ENCODE measurements at regions of chr1 and their contacts with region 1.

Region 1: DNA sequence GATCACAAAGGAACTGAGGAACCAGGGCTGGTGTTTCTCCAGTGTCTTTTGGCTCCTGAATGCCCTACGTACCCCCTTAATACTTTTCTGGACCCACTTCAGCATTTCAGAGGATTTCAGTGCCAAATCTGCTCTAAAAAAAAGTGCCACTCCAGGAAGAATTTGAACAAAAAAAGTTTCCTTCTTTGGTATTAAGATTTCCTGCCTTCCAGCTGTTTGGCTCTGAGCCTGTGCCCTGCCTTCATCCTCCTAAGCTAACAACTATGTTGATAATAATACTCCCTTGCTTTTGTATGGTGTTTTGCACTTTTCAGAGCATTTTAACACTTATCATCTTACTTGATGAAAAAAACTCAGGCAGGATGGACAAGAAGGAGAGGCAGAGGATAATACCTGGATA is 11.0 kb upstream of the RIMS3 start:
- DNase-seq: no peak
- H3K4me3 ChIP-seq: no peak overlapping the region
- H3K27ac ChIP-seq: no peak overlapping the region
- H3K4me1 ChIP-seq: peaks cover 0 to 15% (median 6%) of the 10 kb centered on the region in 4 donors
- H3K27me3 ChIP-seq: no peaks in the 10 kb centered on the region
- CTCF ChIP-seq: no peak

Region 2: GRCh38 chr1:40711465-40712404 is 35.2 kb after region 1 on chr1:
- intact Hi-C with region 1: no loop called
- DNase-seq: no peak
- H3K4me3 ChIP-seq: peak overlapping the region; percentile 54
- H3K27ac ChIP-seq: peak overlapping the region; percentile 62 to 67
- H3K4me1 ChIP-seq: peaks cover 0 to 62% (median 35%) of the 10 kb centered on the region in 4 donors
- H3K27me3 ChIP-seq: no peaks in the 10 kb centered on the region
- CTCF ChIP-seq: no peak

Region 3: DNA sequence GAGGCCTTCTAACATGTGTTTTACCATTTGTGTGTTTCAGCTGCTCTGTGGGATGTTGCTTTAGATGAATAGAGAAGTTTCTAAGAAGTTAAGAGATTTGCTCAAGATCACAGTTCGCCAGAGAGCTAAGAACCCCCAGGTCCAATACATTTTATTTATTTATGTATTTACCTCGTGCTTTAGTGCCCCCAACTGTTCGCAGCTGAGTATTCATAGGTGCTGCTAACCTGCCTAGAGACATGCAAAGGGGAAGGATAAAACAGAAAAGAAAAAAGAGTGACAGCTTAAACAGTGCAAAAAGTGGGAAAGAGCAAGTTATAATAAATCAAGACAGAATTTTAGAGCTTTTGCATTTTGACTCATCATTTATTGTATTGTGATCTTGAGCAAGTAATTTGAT is 46.1 kb after region 1 on chr1:
- intact Hi-C with region 1: no loop called
- DNase-seq: no peak
- H3K4me3 ChIP-seq: no peak overlapping the region
- H3K27ac ChIP-seq: no peak overlapping the region
- H3K4me1 ChIP-seq: peaks cover 0 to 48% (median 20%) of the 10 kb centered on the region in 4 donors
- H3K27me3 ChIP-seq: no peaks in the 10 kb centered on the region
- CTCF ChIP-seq: no peak

Region 4: GRCh38 chr1:40763742-40764532 is 87.4 kb after region 1 on chr1:
- intact Hi-C with region 1: loop called (anchors 5 kb)
- DNase-seq: no peak
- H3K4me3 ChIP-seq: no peak overlapping the region
- H3K27ac ChIP-seq: no peak overlapping the region
- H3K4me1 ChIP-seq: peaks cover 0 to 16% (median 7%) of the 10 kb centered on the region in 4 donors
- H3K27me3 ChIP-seq: no peaks in the 10 kb centered on the region
- CTCF ChIP-seq: no peak

Region 5: DNA sequence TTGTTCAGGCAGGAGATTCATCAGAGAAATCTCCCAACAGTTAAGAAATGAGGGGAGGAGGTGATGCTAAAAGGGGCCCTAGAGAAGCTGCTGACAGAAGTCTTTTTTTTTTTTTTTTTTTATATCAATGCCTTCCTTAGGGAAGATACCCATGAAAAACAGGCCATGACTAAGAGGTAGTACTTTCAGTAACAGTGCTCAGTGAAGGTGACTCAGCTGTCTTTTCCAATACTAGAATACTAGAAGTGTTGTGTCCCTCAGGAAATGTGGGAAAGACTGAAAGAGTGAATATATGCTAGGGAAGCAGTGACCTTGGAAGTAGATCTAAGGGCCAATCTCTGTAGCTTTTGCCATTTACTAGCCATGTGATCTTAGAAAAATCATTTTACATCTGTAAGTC is 397.5 kb after region 1 on chr1:
- intact Hi-C with region 1: no loop called
- DNase-seq: no peak
- H3K4me3 ChIP-seq: no peak overlapping the region
- H3K27ac ChIP-seq: no peak overlapping the region
- H3K4me1 ChIP-seq: no peaks in the 10 kb centered on the region
- H3K27me3 ChIP-seq: no peaks in the 10 kb centered on the region
- CTCF ChIP-seq: no peak